PC-9 (cell line): ENCODE measurements at regions of chr1 and their contacts with region 1.

Region 1: DNA sequence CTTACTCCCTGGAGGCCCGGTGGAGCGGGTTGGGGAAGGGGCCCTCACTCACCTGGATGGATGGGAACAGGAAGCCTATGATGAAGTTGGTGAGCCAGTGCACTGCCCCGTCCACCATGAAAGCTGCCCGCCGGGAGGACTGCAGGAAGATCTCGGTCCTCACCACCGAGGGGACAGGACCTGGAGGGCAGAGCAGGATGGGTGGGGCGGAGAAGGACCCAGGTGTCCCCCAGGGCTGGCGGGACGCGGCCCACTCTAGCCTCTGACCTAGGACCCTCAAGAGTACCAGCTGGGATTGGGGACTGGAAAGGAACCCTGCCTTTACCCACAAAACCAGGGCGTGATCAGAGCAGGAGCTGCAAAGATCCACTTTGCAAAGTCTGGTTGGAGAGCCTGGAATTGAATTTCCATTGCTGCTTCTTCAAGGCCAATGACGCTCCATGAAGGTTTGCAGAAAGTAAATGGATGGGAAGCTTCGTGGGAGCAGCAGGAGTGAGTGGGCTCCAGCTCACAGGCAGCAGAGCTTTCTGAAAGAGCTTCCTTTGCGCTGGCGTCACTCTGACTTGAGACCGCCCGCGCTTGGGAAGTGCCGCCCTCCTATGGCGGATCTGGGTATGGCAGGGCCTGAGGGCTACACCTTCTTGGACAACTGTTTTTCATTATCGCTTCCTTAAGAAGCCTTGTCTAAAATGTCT is 21.4 kb downstream of the SLC2A7 start:
- DNase-seq: peak; percentile 63 to 86
- H3K4me3 ChIP-seq: no peak overlapping the region
- H3K27ac ChIP-seq: no peak overlapping the region
- H3K4me1 ChIP-seq: no peaks in the 10 kb centered on the region
- H3K27me3 ChIP-seq: no peaks in the 10 kb centered on the region
- CTCF ChIP-seq: peak; percentile 90

Region 2: GRCh38 chr1:8915446-8915845 is 89.4 kb before region 1 on chr1:
- CTCF ChIA-PET with region 1: interaction called, 7 read pairs
- POLR2A ChIA-PET with region 1: no interaction called
- intact Hi-C with region 1: loop called (anchors 5 kb)
- DNase-seq: no peak
- H3K4me3 ChIP-seq: no peak overlapping the region
- H3K27ac ChIP-seq: no peak overlapping the region
- H3K4me1 ChIP-seq: no peaks in the 10 kb centered on the region
- H3K27me3 ChIP-seq: no peaks in the 10 kb centered on the region
- CTCF ChIP-seq: no peak

Region 3: DNA sequence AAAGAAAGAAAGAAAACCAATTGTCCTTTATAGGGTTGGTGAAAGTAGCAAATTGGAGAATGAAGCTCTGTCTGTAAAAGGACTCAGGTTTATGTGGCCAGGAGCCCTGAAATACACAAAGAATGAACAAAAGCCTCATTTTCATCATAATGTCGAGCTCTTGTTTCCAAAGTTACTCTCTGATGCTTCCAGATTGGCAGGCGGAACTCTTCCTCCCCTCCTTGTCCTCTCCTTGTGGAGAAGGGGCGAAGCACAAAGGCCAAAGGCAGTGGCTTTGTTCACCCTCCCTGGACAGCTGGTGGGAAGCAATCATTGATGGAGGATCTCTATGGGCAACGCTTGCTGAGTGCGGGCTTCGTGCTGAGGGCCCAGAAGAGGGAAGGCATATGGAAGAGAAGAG is 53.6 kb before region 1 on chr1:
- CTCF ChIA-PET with region 1: no interaction called
- POLR2A ChIA-PET with region 1: no interaction called
- intact Hi-C with region 1: no loop called
- DNase-seq: no peak
- H3K4me3 ChIP-seq: no peak overlapping the region
- H3K27ac ChIP-seq: no peak overlapping the region
- H3K4me1 ChIP-seq: no peaks in the 10 kb centered on the region
- H3K27me3 ChIP-seq: no peaks in the 10 kb centered on the region
- CTCF ChIP-seq: no peak

Region 4: DNA sequence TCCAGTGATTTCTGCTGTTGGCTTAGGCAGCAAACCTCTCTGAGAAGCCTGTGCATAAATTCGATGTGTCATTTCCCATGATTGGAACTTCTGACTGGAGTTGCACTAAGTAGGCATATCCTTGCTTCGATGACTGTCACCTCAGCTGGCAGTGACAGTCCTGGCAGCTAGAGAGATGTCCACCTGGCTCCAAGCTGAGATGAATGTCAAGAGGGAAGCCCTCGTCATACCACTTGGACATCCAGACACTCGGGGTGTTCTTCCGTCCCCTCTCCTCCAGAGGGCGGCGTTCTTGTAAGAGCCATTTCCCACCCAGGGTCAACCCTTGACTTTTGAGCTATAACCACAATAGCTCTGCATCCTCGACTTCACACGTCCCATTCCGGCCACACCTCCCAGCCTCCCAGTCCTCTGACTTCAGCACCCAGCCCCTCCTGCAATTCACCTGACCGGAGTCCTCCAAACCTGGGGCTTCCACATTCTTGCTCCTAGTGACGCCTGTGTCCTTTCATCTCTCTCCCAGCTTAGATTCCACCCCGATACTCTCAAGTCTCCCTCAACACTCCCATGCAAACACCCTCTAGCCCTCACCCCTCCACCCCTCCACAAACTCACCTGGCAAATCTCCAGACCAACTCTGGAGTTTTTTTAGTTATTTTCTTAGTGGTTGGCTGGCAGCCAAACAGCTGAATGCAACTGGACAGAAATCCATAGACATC is 41.9 kb before region 1 on chr1:
- CTCF ChIA-PET with region 1: interaction called, 10 read pairs
- POLR2A ChIA-PET with region 1: no interaction called
- intact Hi-C with region 1: no loop called
- DNase-seq: peak; percentile 62 to 63
- H3K4me3 ChIP-seq: no peak overlapping the region
- H3K27ac ChIP-seq: no peak overlapping the region
- H3K4me1 ChIP-seq: no peaks in the 10 kb centered on the region
- H3K27me3 ChIP-seq: no peaks in the 10 kb centered on the region
- CTCF ChIP-seq: peak; percentile 56

Region 5: GRCh38 chr1:9101510-9102146 is 96.8 kb after region 1 on chr1:
- CTCF ChIA-PET with region 1: interaction called, 14 read pairs
- POLR2A ChIA-PET with region 1: no interaction called
- intact Hi-C with region 1: loop called (anchors 2 kb)
- DNase-seq: peak in 1 of 2 experiments; percentile 38
- H3K4me3 ChIP-seq: no peak overlapping the region
- H3K27ac ChIP-seq: no peak overlapping the region
- H3K4me1 ChIP-seq: no peaks in the 10 kb centered on the region
- H3K27me3 ChIP-seq: no peaks in the 10 kb centered on the region
- CTCF ChIP-seq: peak; percentile 63